AG04450 (cell line): ENCODE measurements at regions of chr4 and their contacts with region 1.

Region 1: DNA sequence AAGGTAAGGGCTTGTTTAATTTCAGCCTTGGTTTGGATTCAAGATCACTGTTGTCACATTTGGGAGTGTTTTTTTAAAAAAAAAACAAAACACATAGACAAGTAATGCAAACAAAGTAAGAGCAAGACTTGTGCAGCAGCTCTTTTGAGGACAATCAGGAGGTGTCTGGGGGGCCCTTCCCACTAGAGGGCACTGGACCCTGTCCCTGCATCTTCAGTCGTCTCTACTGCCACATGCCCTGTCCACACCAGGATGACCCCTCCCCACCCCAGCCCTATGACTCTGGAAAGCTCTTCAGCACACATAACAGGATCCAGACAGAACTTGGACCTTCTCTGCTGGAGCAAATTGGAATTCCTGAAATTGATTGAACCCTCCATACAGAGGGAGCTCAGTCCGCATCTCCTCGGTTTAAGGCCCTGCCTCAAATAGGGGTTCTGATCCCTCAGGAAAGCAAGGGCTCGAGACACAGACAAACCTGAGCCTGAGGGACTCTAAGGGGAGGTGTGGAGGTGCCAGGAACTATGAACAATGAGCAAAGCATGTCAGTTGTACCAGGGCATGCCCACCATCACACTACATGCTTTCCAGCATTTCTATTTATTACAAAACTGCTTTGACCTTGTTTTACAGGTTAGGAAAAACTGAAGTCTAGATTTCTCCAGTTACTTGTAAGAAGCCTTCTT is 70.9 kb downstream of the USP46 start:
- DNase-seq: no peak
- H3K4me3 ChIP-seq: no peak overlapping the region
- H3K27ac ChIP-seq: peak overlapping the region; percentile 55
- H3K27me3 ChIP-seq: no peaks in the 10 kb centered on the region
- CTCF ChIP-seq: peak; percentile 50

Region 2: GRCh38 chr4:52627876-52628275 is 39.6 kb after region 1 on chr4:
- CTCF ChIA-PET with region 1: interaction called, 11 read pairs
- POLR2A ChIA-PET with region 1: no interaction called
- DNase-seq: no peak
- H3K4me3 ChIP-seq: no peak overlapping the region
- H3K27ac ChIP-seq: no peak overlapping the region
- H3K27me3 ChIP-seq: no peaks in the 10 kb centered on the region
- CTCF ChIP-seq: no peak